ENCODE measurements at regions of chr12 and their contacts with region 1.

Region 1: GRCh38 chr12:14845350-14845750 is 2.0 kb upstream of the ART4 start:
- DNase-seq: peak; percentile 75
- H3K4me3 ChIP-seq: no peak overlapping the region
- H3K27ac ChIP-seq: no peak overlapping the region
- H3K4me1 ChIP-seq: peaks cover 5% of the 10 kb centered on the region
- CTCF ChIP-seq: peak; percentile 99

Region 2: DNA sequence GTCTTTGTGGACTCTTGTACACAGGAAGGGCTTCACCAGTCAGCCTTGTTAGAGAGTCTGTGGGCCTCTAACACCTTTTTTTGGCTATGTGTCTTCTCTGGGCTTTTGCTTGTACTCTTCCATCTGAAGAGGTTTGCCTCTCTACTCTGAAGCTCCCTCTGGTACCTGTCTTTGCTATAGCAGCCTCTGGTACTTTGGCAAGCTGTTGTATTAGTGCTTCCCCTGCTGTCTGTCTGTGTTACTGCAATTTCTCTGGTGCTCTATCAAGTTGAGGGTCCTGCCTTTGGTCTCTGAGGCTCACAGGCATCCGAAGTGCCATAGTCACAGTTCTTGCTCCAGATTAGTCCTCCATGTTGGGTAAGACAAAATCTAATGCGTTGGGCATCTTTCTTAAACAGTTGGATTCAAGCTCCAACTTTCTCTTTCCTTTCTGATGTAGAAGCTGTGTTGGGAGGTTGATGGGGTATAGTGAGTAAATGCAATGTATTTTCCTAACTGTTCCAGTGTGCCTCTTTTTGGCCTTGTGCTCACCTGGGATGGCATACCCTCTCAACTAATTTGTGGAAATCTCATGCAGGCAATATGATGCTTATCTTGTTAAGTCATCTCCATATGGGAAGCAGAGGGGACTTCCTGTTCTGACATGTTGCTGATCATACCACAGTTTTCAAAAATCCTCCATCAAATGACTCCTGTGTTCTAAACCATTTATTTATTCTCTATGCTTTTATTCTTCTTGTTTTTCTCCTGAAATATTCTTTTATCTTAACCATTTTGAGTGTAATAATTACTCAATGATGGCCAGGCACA is 391.0 kb before region 1 on chr12:
- CTCF ChIA-PET with region 1: no interaction called
- POLR2A ChIA-PET with region 1: no interaction called
- intact Hi-C with region 1: no loop called
- DNase-seq: peak; percentile 83
- H3K4me3 ChIP-seq: no peak overlapping the region
- H3K27ac ChIP-seq: no peak overlapping the region
- H3K4me1 ChIP-seq: peaks cover 10% of the 10 kb centered on the region
- CTCF ChIP-seq: peak; percentile 97

Region 3: GRCh38 chr12:14723763-14724162 is 121.6 kb before region 1 on chr12:
- CTCF ChIA-PET with region 1: no interaction called
- POLR2A ChIA-PET with region 1: no interaction called
- intact Hi-C with region 1: loop called (anchors 5 kb)
- DNase-seq: peak; percentile 73
- H3K4me3 ChIP-seq: no peak overlapping the region
- H3K27ac ChIP-seq: no peak overlapping the region
- H3K4me1 ChIP-seq: no peaks in the 10 kb centered on the region
- CTCF ChIP-seq: peak; percentile 89

Region 4: DNA sequence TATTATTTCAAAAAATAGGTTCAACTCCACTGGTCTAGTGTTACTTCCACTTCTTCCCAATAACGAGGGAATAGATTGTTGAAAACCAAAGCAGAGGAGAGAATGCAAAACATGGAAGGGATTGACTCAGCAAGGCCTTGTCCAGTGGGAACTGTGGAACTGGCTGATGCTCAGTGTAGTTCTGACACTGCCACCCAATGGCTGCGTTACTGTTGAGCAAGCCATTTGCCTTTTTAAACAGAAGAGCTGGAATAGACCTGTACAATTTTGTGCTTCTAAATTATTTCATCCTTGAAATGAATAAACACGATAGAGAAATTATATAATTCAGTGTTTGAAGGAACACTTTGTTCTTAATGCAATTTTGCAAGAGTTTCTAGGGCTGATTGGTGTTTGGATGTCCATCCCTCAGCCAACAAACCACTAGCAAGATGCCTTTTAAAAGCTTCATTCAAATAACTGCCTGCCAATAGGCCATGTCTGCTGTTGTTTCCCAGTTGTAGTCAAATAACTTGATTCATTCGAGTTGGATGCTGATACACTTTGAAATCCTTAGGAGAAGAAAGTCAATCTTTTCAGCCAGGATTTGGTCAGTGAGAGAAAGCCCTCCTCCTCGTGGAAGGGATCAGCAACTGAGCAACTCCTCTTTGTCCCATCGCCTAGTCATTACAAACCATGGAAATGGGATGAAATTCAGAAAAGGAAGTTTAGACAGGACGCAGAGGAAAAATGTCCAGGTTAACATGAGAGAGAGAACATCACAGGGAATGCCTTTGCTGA is 47.6 kb after region 1 on chr12:
- CTCF ChIA-PET with region 1: no interaction called
- POLR2A ChIA-PET with region 1: interaction called, 8 read pairs
- intact Hi-C with region 1: loop called (anchors 1 kb)
- DNase-seq: peak; percentile 15
- H3K4me3 ChIP-seq: no peak overlapping the region
- H3K27ac ChIP-seq: no peak overlapping the region
- H3K4me1 ChIP-seq: no peaks in the 10 kb centered on the region
- CTCF ChIP-seq: peak; percentile 62

Region 5: DNA sequence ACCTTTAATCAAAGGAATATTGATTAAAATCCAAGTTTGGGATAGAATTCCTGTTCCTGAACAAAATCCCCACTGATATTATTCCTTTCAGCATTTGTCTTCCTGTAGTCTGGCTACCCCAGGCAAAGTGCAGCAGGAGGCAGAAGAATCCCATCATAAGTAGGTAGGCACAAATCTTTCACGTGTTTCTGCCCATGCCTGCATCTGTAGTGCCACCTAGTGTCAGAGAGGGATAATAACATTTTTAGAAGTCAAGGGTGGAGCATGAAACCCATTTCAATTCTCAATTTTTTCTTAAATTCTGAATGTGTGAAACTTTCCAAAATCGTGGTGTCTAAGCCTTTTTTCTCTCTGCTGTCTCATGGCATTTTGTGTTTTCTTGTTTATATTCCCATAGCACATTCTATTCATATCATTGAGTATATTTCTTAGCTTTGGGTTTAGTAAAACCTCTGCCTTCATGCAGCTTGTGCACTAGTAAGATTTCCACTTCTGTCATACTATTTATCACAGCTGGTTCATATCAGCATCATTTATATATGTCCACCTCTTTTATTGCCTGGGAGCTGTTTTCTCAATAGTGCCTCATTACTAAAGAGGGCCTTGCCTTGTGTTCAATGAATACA is 423.7 kb after region 1 on chr12:
- CTCF ChIA-PET with region 1: no interaction called
- POLR2A ChIA-PET with region 1: no interaction called
- intact Hi-C with region 1: loop called (anchors 5 kb)
- DNase-seq: peak; percentile 66
- H3K4me3 ChIP-seq: no peak overlapping the region
- H3K27ac ChIP-seq: no peak overlapping the region
- H3K4me1 ChIP-seq: no peaks in the 10 kb centered on the region
- CTCF ChIP-seq: peak; percentile 96

Measured in OCI-LY7 (cell line).